CD4-positive, alpha-beta T cell (primary cell): ENCODE measurements at regions of chr12 and their contacts with region 1.

Region 1: GRCh38 chr12:44875954-44876553 is at the start of gene NELL2:
- DNase-seq: peak; percentile 42 to 79 (median 62)
- ATAC-seq: peak; percentile 70
- H3K4me3 ChIP-seq: peak within 1 kb of the TSS; percentile 82
- H3K4me3 Mint-ChIP-seq: peak within 1 kb of the TSS; percentile 98
- H3K27ac ChIP-seq: peak within 1 kb of the TSS; percentile 1 to 14
- H3K27ac Mint-ChIP-seq: peak within 1 kb of the TSS; percentile 77
- H3K4me1 ChIP-seq: peaks cover 24% of the 10 kb centered on the region
- H3K4me1 Mint-ChIP-seq: peaks cover 44% of the 10 kb centered on the region
- H3K27me3 ChIP-seq: peaks cover 8 to 9% of the 10 kb centered on the region in 2 experiments
- H3K27me3 Mint-ChIP-seq: peaks cover 18% of the 10 kb centered on the region
- CTCF ChIP-seq: no peak
- total RNA-seq, gene NELL2: 142 to 147 TPM

Region 2: DNA sequence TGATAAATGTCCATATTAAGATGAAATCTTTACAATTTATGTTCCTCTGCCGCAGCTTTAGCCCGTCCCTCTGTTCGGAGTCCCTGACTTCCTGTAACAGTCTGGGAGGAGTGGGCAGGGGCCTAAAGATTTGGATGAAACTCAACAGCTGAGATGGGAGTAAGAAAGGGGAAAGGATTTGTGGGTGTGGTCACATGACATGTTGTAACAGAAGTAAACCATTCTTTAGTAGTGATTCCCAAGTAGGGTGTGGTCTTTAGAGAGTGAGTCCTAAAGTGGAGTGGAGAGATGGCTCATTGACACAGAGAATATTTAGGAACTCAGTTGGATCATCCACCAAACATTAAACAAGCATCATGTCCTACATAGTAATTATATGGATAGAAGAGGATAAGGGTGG is 1027.3 kb before region 1 on chr12:
- CTCF ChIA-PET with region 1: no interaction called
- POLR2A ChIA-PET with region 1: no interaction called
- intact Hi-C with region 1: no loop called
- DNase-seq: no peak
- ATAC-seq: no peak
- H3K4me3 ChIP-seq: no peak overlapping the region
- H3K4me3 Mint-ChIP-seq: no peak overlapping the region
- H3K27ac ChIP-seq: no peak overlapping the region
- H3K27ac Mint-ChIP-seq: no peak overlapping the region
- H3K4me1 ChIP-seq: no peaks in the 10 kb centered on the region
- H3K4me1 Mint-ChIP-seq: no peaks in the 10 kb centered on the region
- H3K27me3 ChIP-seq: no peaks in the 10 kb centered on the region
- H3K27me3 Mint-ChIP-seq: no peaks in the 10 kb centered on the region
- CTCF ChIP-seq: no peak

Region 3: GRCh38 chr12:44728566-44728965 is 147.5 kb before region 1 on chr12:
- CTCF ChIA-PET with region 1: no interaction called
- POLR2A ChIA-PET with region 1: no interaction called
- intact Hi-C with region 1: no loop called
- DNase-seq: no peak
- ATAC-seq: no peak
- H3K4me3 ChIP-seq: no peak overlapping the region
- H3K4me3 Mint-ChIP-seq: no peak overlapping the region
- H3K27ac ChIP-seq: no peak overlapping the region
- H3K27ac Mint-ChIP-seq: no peak overlapping the region
- H3K4me1 ChIP-seq: no peaks in the 10 kb centered on the region
- H3K4me1 Mint-ChIP-seq: peaks cover 19% of the 10 kb centered on the region
- H3K27me3 ChIP-seq: no peaks in the 10 kb centered on the region
- H3K27me3 Mint-ChIP-seq: no peaks in the 10 kb centered on the region
- CTCF ChIP-seq: no peak

Region 4: GRCh38 chr12:44774815-44775411 is 101.1 kb before region 1 on chr12:
- CTCF ChIA-PET with region 1: interaction called, 8 read pairs
- POLR2A ChIA-PET with region 1: interaction called, 7 read pairs
- intact Hi-C with region 1: loop called (anchors 1 to 2 kb)
- DNase-seq: peak; percentile 43 to 78 (median 56)
- ATAC-seq: no peak
- H3K4me3 ChIP-seq: no peak overlapping the region
- H3K4me3 Mint-ChIP-seq: no peak overlapping the region
- H3K27ac ChIP-seq: no peak overlapping the region
- H3K27ac Mint-ChIP-seq: no peak overlapping the region
- H3K4me1 ChIP-seq: no peaks in the 10 kb centered on the region
- H3K4me1 Mint-ChIP-seq: peaks cover 4% of the 10 kb centered on the region
- H3K27me3 ChIP-seq: no peaks in the 10 kb centered on the region
- H3K27me3 Mint-ChIP-seq: no peaks in the 10 kb centered on the region
- CTCF ChIP-seq: peak; percentile 91

Region 5: GRCh38 chr12:44827832-44828438 is 48.1 kb before region 1 on chr12:
- CTCF ChIA-PET with region 1: interaction called, 22 read pairs
- POLR2A ChIA-PET with region 1: interaction called, 35 read pairs
- intact Hi-C with region 1: no loop called
- DNase-seq: peak in 3 of 14 experiments; percentile 76 to 79 (median 77)
- ATAC-seq: peak; percentile 86
- H3K4me3 ChIP-seq: peak overlapping the region; percentile 17
- H3K4me3 Mint-ChIP-seq: peak overlapping the region; percentile 78
- H3K27ac ChIP-seq: peak overlapping the region; percentile 48 to 59
- H3K27ac Mint-ChIP-seq: peak overlapping the region; percentile 94
- H3K4me1 ChIP-seq: peaks cover 23% of the 10 kb centered on the region
- H3K4me1 Mint-ChIP-seq: peaks cover 67% of the 10 kb centered on the region
- H3K27me3 ChIP-seq: no peaks in the 10 kb centered on the region
- H3K27me3 Mint-ChIP-seq: no peaks in the 10 kb centered on the region
- CTCF ChIP-seq: no peak

Region 6: GRCh38 chr12:44847888-44848702 is 28.0 kb before region 1 on chr12:
- CTCF ChIA-PET with region 1: interaction called, 4 read pairs
- POLR2A ChIA-PET with region 1: interaction called, 72 read pairs
- intact Hi-C with region 1: no loop called
- DNase-seq: peak; percentile 45 to 89 (median 60)
- ATAC-seq: peak; percentile 87
- H3K4me3 ChIP-seq: peak overlapping the region; percentile 3
- H3K4me3 Mint-ChIP-seq: peak overlapping the region; percentile 74
- H3K27ac ChIP-seq: peak overlapping the region; percentile 75 to 79
- H3K27ac Mint-ChIP-seq: peak overlapping the region; percentile 98
- H3K4me1 ChIP-seq: peaks cover 24% of the 10 kb centered on the region
- H3K4me1 Mint-ChIP-seq: peaks cover 91% of the 10 kb centered on the region
- H3K27me3 ChIP-seq: no peaks in the 10 kb centered on the region
- H3K27me3 Mint-ChIP-seq: no peaks in the 10 kb centered on the region
- CTCF ChIP-seq: no peak

Region 7: GRCh38 chr12:44930972-44931600 is 55.0 kb after region 1 on chr12:
- CTCF ChIA-PET with region 1: interaction called, 8 read pairs
- POLR2A ChIA-PET with region 1: no interaction called
- intact Hi-C with region 1: loop called in 1 of 2 experiments (anchors 5 kb)
- DNase-seq: peak in 3 of 14 experiments; percentile 67 to 80 (median 74)
- ATAC-seq: peak; percentile 60
- H3K4me3 ChIP-seq: no peak overlapping the region
- H3K4me3 Mint-ChIP-seq: no peak overlapping the region
- H3K27ac ChIP-seq: no peak overlapping the region
- H3K27ac Mint-ChIP-seq: no peak overlapping the region
- H3K4me1 ChIP-seq: no peaks in the 10 kb centered on the region
- H3K4me1 Mint-ChIP-seq: peaks cover 5% of the 10 kb centered on the region
- H3K27me3 ChIP-seq: no peaks in the 10 kb centered on the region
- H3K27me3 Mint-ChIP-seq: peaks cover 4% of the 10 kb centered on the region
- CTCF ChIP-seq: peak; percentile 77

Region 8: GRCh38 chr12:45324391-45324790 is 448.3 kb after region 1 on chr12:
- CTCF ChIA-PET with region 1: no interaction called
- POLR2A ChIA-PET with region 1: no interaction called
- intact Hi-C with region 1: no loop called
- DNase-seq: no peak
- ATAC-seq: no peak
- H3K4me3 ChIP-seq: no peak overlapping the region
- H3K4me3 Mint-ChIP-seq: no peak overlapping the region
- H3K27ac ChIP-seq: no peak overlapping the region
- H3K27ac Mint-ChIP-seq: no peak overlapping the region
- H3K4me1 ChIP-seq: no peaks in the 10 kb centered on the region
- H3K4me1 Mint-ChIP-seq: peaks cover 23% of the 10 kb centered on the region
- H3K27me3 ChIP-seq: no peaks in the 10 kb centered on the region
- H3K27me3 Mint-ChIP-seq: no peaks in the 10 kb centered on the region
- CTCF ChIP-seq: no peak

Region 9: GRCh38 chr12:46650607-46651088 is 1774.6 kb after region 1 on chr12:
- CTCF ChIA-PET with region 1: no interaction called
- POLR2A ChIA-PET with region 1: no interaction called
- intact Hi-C with region 1: no loop called
- DNase-seq: no peak
- ATAC-seq: no peak
- H3K4me3 ChIP-seq: no peak overlapping the region
- H3K4me3 Mint-ChIP-seq: no peak overlapping the region
- H3K27ac ChIP-seq: no peak overlapping the region
- H3K27ac Mint-ChIP-seq: no peak overlapping the region
- H3K4me1 ChIP-seq: no peaks in the 10 kb centered on the region
- H3K4me1 Mint-ChIP-seq: no peaks in the 10 kb centered on the region
- H3K27me3 ChIP-seq: no peaks in the 10 kb centered on the region
- H3K27me3 Mint-ChIP-seq: no peaks in the 10 kb centered on the region
- CTCF ChIP-seq: no peak